ENCODE measurements at regions of chr17 and their contacts with region 1.

Region 1: GRCh38 chr17:80454557-80455335 is 21.7 kb downstream of the NPTX1 start:
- DNase-seq: peak; percentile 93
- ATAC-seq: peak; percentile 90
- H3K4me3 ChIP-seq: peak overlapping the region; percentile 65 to 88 (median 86)
- H3K27ac ChIP-seq: peak overlapping the region; percentile 91
- H3K4me1 ChIP-seq: peaks cover 32% of the 10 kb centered on the region
- H3K27me3 ChIP-seq: peaks cover 9 to 55% of the 10 kb centered on the region in 2 experiments; a peak in 4 of 5 replicates
- CTCF ChIP-seq: peak; percentile 13; the same call in 1 of the 2 replicates
- EP300 ChIP-seq: 0 out of 4 replicates have a peak, but pooled peaks of 1 of the 2 experiments have one; percentile 22
- POLR2A ChIP-seq: peak; percentile 76 to 88
- RAD21 ChIP-seq: peak; percentile 75

Region 2: DNA sequence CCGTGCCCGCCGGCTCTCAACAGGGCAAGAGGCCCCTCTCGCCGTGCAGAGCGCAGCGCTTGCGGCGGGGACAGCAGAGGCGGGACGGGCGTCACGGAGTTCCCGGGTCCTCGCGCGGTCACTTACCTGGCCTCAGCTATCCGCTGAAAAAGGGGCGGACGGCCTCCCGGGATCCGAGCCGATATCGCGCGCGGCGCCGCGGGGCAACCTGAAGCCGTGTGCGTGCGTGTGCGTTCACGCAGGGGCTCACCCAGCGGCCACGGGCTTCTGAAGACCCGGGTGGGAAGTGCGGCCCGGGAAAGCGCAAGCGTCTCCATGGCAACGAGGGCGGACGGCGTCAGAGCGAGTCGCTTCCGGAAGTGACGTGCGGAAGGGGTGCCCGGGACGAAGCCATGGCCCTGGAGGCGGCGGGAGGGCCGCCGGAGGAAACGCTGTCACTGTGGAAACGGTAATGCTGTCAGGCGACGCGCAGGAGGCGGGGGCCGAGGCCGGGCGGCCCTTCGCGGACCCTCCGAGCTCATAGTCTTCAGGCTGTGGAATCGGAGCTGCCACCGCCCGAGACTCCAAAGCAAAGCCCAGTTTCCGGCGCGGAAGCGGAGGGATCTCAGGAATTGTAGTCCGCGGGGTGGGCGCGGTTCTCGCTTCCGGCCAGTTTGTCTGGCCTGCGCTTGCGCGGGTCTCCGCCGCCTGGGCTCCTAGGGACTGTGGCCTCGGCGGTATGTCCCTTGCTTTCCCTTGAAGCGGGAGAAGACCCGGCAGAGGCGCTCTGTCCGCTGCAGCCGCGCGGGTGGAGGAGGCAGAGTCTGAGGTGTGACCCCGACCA is 39.7 kb before region 1 on chr17 and contains the start of gene ENDOV:
- CTCF ChIA-PET with region 1: no interaction called
- POLR2A ChIA-PET with region 1: interaction called, 10 read pairs
- in situ Hi-C with region 1: no loop called
- intact Hi-C with region 1: no loop called
- DNase-seq: peak; percentile 91
- ATAC-seq: peak; percentile 92
- H3K4me3 ChIP-seq: peak within 1 kb of the TSS; percentile 72 to 99 (median 90)
- H3K27ac ChIP-seq: peak within 1 kb of the TSS; percentile 89
- H3K4me1 ChIP-seq: peaks cover 36% of the 10 kb centered on the region
- H3K27me3 ChIP-seq: peaks cover 0 to 2% of the 10 kb centered on the region in 2 experiments; a peak in 3 of 5 replicates
- CTCF ChIP-seq: no peak; the same call in 1 of the 2 replicates
- EP300 ChIP-seq: no peak; a peak in 1 of 4 replicates
- POLR2A ChIP-seq: peak; percentile 85 to 86
- RAD21 ChIP-seq: peak; percentile 65
- total RNA-seq, gene ENDOV: 15.1 and 16.0 TPM in 2 replicates

Region 3: GRCh38 chr17:80468242-80468641 is 13.5 kb after region 1 on chr17:
- CTCF ChIA-PET with region 1: no interaction called
- POLR2A ChIA-PET with region 1: interaction called, 20 read pairs
- in situ Hi-C with region 1: no loop called
- intact Hi-C with region 1: no loop called
- DNase-seq: no peak
- ATAC-seq: peak; percentile 20; the same call in 2 of the 3 replicates
- H3K4me3 ChIP-seq: no peak overlapping the region
- H3K27ac ChIP-seq: no peak overlapping the region
- H3K4me1 ChIP-seq: no peaks in the 10 kb centered on the region
- H3K27me3 ChIP-seq: peaks cover 41 to 99% of the 10 kb centered on the region in 2 experiments
- CTCF ChIP-seq: no peak
- EP300 ChIP-seq: no peak
- POLR2A ChIP-seq: no peak
- RAD21 ChIP-seq: no peak

Region 4: GRCh38 chr17:80491478-80492342 is 37.0 kb after region 1 on chr17:
- CTCF ChIA-PET with region 1: no interaction called
- POLR2A ChIA-PET with region 1: interaction called, 35 read pairs
- in situ Hi-C with region 1: no loop called
- intact Hi-C with region 1: no loop called
- DNase-seq: peak; percentile 89
- ATAC-seq: peak; percentile 76
- H3K4me3 ChIP-seq: no peak overlapping the region
- H3K27ac ChIP-seq: no peak overlapping the region
- H3K4me1 ChIP-seq: peaks cover 14% of the 10 kb centered on the region
- H3K27me3 ChIP-seq: peaks cover 6 to 37% of the 10 kb centered on the region in 2 experiments
- CTCF ChIP-seq: no peak
- EP300 ChIP-seq: 0 out of 4 replicates have a peak, but pooled peaks of 1 of the 2 experiments have one; percentile 7
- POLR2A ChIP-seq: no peak
- RAD21 ChIP-seq: no peak

Region 5: GRCh38 chr17:80498242-80498919 is 43.6 kb after region 1 on chr17:
- CTCF ChIA-PET with region 1: no interaction called
- POLR2A ChIA-PET with region 1: interaction called, 35 read pairs
- in situ Hi-C with region 1: no loop called
- intact Hi-C with region 1: no loop called
- DNase-seq: peak; percentile 76
- ATAC-seq: peak; percentile 71
- H3K4me3 ChIP-seq: peak overlapping the region; percentile 17 to 70 (median 54); a peak in 5 of 6 replicates
- H3K27ac ChIP-seq: no peak overlapping the region
- H3K4me1 ChIP-seq: peaks cover 36% of the 10 kb centered on the region
- H3K27me3 ChIP-seq: peaks cover 21 to 67% of the 10 kb centered on the region in 2 experiments; a peak in 4 of 5 replicates
- CTCF ChIP-seq: no peak
- EP300 ChIP-seq: no peak
- POLR2A ChIP-seq: peak in 1 of 2 experiments; percentile 60; a peak in 1 of 4 replicates
- RAD21 ChIP-seq: no peak

Region 6: GRCh38 chr17:80630560-80631120 is 175.9 kb after region 1 on chr17:
- CTCF ChIA-PET with region 1: no interaction called
- POLR2A ChIA-PET with region 1: interaction called, 21 read pairs
- in situ Hi-C with region 1: no loop called
- intact Hi-C with region 1: no loop called
- DNase-seq: no peak
- ATAC-seq: no peak; the same call in 1 of the 3 replicates
- H3K4me3 ChIP-seq: no peak overlapping the region
- H3K27ac ChIP-seq: peak overlapping the region; percentile 85
- H3K4me1 ChIP-seq: peaks cover 63% of the 10 kb centered on the region
- H3K27me3 ChIP-seq: no peaks in the 10 kb centered on the region
- CTCF ChIP-seq: no peak
- EP300 ChIP-seq: no peak
- POLR2A ChIP-seq: no peak
- RAD21 ChIP-seq: no peak

Region 7: GRCh38 chr17:80991645-80992076 is 536.9 kb after region 1 on chr17 and contains the start of gene CHMP6:
- CTCF ChIA-PET with region 1: no interaction called
- POLR2A ChIA-PET with region 1: interaction called, 10 read pairs
- in situ Hi-C with region 1: no loop called
- intact Hi-C with region 1: no loop called
- DNase-seq: peak; percentile 60
- ATAC-seq: peak; percentile 13
- H3K4me3 ChIP-seq: peak within 1 kb of the TSS; percentile 87 to 95 (median 95)
- H3K27ac ChIP-seq: peak within 1 kb of the TSS; percentile 49
- H3K4me1 ChIP-seq: peaks cover 63% of the 10 kb centered on the region
- H3K27me3 ChIP-seq: peaks cover 3 to 30% of the 10 kb centered on the region in 2 experiments; a peak in 4 of 5 replicates
- CTCF ChIP-seq: peak; percentile 38; the same call in 1 of the 2 replicates
- EP300 ChIP-seq: peak in 1 of 2 experiments; percentile 46; a peak in 1 of 4 replicates
- POLR2A ChIP-seq: peak; percentile 46 to 55; a peak in 2 of 4 replicates
- RAD21 ChIP-seq: peak; percentile 54
- total RNA-seq, gene CHMP6: 24.2 and 24.6 TPM in 2 replicates

Measured in HepG2 (cell line).